Mammary epithelial cell (primary cell): ENCODE measurements at regions of chr6 and their contacts with region 1.

Region 1: DNA sequence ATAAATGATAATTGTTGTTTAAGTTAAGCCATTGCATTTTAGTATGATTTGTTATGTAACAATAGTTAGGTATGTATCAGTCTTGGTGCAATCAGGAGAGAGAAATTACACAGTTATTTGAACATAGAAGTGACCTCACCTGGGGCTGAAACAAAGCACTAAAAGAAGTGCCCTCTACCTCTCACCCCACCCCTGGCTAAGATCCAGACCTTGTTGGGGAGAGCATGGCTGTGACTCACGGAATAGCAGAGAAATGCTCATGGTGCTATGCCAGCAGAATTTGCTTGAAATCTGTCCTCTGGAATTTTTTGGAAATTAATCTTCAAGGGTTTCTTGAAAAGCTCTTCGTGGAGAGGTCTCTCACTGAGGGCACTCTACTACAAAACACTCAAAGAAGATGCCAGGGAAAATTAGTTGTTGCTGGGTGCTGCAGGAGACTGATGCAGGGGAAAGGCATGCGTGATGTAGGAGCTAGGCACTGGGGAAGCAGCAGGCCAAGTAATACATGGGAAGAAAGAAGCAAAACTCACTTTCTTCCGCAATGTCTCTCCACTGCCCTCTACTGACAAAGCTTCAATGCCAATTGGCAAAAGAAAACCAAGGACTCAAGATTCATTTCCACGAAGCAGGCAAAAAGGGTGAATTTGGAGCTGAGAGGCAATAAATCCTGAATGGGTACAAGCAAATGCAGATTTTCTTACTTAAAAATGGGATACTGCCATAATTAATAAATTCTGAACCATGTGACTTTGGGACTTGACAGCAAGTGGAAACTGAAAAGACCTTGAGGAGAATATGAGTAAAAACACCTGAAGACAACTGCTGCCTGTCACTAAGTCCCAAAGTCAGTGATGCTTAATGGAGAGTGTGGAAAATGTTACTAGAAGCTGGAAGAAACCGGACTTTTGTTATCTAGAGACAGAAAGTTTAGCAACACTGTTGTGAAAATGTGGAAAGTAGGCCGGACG is 136.3 kb upstream of the ZNF184 start:
- DNase-seq: peak; percentile 86
- H3K4me3 ChIP-seq: no peak overlapping the region
- H3K27ac ChIP-seq: peak overlapping the region; percentile 11
- H3K4me1 ChIP-seq: peaks cover 17% of the 10 kb centered on the region
- H3K27me3 ChIP-seq: no peaks in the 10 kb centered on the region
- CTCF ChIP-seq: peak; percentile 85 to 89

Region 2: DNA sequence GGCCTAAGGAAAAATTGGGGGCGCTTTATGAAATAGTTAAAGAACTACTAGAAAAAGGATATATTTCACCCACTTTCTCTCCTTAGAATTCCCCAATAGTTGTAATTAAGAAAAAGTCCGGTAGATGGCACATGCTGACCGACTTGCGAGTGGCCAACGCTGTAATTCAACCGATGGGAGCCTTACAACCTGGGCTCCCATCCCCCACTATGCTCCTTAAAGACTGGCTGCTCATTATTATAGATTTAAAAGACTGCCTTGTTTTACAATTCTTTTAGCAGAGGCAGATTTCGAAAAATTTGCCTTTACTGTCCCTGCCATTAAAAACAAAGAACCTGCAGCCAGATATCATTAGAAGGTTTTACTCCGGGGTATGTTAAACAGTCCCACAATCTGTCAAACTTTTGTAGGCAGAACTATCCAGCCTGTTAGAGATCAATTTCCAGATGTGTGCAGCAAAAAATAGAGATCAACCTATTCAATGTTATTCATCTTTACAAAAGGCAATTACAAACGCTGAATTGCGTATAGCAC is 420.2 kb before region 1 on chr6:
- CTCF ChIA-PET with region 1: no interaction called
- dilution Hi-C with region 1: no loop called
- in situ Hi-C with region 1: no loop called
- intact Hi-C with region 1: loop called (anchors 1 kb)
- DNase-seq: peak; percentile 71
- H3K4me3 ChIP-seq: peak overlapping the region; percentile 56 to 74 (median 71)
- H3K27ac ChIP-seq: peak overlapping the region; percentile 44
- H3K4me1 ChIP-seq: no peaks in the 10 kb centered on the region
- H3K27me3 ChIP-seq: no peaks in the 10 kb centered on the region
- CTCF ChIP-seq: peak; percentile 38 to 68

Region 3: DNA sequence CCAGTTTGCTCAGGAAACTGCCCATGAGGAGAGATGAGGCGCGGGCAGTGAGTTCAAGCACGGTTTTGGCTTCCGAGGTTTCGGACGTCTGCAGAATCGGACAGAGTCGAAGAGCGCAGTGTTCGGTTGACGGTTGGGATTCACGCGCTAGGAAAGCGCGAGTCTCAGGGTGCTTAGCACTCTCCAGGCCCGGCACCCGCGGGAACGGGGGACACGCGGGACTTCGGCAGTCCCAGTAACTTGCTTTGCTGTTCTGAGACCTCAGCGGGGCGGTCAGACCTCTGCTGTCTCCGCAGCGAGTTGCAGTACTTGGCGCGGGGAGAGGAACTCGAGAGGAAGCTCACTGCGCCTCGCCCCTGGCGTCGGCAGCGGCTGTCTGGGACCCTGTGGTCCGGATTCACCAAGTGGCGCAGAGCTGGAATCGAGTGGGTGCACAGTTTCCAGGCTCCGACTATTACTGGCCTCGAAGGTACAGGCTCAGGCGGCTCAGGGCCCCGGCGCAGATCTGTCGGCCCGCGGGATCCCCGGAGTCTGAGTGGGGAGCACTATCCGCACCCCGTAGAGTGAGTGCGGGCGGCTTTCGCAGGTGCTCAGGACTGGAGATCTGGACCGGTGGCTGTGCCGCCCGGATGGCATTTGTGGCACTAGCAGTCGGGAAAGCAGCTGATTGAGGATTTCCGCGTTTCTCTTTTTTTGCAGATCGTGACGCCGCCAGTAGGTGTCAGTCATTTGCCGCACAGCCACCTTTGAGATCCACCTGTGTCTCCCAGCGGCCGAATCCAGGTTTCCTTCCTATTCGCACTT is 296.9 kb before region 1 on chr6 and contains the start of gene POM121L2:
- CTCF ChIA-PET with region 1: no interaction called
- dilution Hi-C with region 1: no loop called
- in situ Hi-C with region 1: loop called in 1 of 2 experiments (anchors 25 kb)
- intact Hi-C with region 1: loop called (anchors 1 kb)
- DNase-seq: peak; percentile 73
- H3K4me3 ChIP-seq: peak within 1 kb of the TSS; percentile 60 to 90 (median 65)
- H3K27ac ChIP-seq: no peak within 1 kb of the TSS
- H3K4me1 ChIP-seq: peaks cover 13% of the 10 kb centered on the region
- H3K27me3 ChIP-seq: no peaks in the 10 kb centered on the region
- CTCF ChIP-seq: peak; percentile 64 to 87
- total RNA-seq, gene POM121L2: not detected

Region 4: DNA sequence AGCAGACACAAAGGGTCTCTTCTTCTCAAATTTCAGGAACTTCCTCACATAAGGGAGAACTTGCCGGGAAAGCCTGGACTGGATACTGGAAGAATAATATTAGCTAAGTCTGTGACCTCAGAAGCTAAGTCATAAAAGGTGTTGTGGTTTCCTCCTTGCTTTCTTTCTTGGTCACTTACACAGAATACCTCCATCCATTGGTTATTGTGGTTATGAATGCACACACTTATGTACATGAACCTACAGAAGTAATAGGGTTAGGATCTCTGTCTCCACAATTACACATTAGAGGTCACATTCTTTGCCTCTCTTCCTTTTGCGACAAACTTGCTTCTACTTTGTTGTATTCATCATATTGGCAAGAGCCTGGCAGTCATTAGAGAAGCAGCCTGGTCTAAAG is 180.2 kb before region 1 on chr6:
- CTCF ChIA-PET with region 1: no interaction called
- dilution Hi-C with region 1: no loop called
- in situ Hi-C with region 1: no loop called
- intact Hi-C with region 1: no loop called
- DNase-seq: no peak
- H3K4me3 ChIP-seq: no peak overlapping the region
- H3K27ac ChIP-seq: no peak overlapping the region
- H3K4me1 ChIP-seq: no peaks in the 10 kb centered on the region
- H3K27me3 ChIP-seq: no peaks in the 10 kb centered on the region
- CTCF ChIP-seq: no peak

Region 5: DNA sequence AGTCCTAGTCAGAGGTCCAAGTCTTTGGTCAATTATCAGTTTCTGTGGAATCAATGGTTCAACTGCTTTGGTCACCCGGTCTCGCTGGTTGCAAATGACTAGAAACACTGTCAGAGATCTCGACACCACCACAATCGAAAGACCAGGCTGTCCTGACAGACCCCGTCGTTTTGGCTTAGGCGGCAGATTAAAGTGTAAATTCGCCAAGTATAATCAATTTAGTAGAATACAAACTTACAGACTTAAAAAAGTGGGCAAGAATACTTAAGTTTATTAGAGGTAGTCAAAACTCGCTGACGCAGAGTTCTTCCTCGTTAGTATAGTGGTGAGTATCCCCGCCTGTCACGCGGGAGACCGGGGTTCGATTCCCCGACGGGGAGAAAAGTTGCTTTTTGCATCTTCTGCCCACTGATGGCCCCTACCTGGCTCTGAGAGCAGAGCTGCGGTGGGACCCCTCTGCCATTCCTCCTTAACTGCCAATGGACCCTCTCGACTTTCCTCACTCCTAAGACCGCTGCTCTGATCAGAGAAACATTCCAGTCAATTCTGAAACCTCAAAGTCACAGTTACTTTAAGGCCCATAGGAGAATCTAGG is 105.7 kb before region 1 on chr6:
- CTCF ChIA-PET with region 1: no interaction called
- dilution Hi-C with region 1: loop called (anchors 10 kb)
- in situ Hi-C with region 1: no loop called
- intact Hi-C with region 1: no loop called
- DNase-seq: peak; percentile 61
- H3K4me3 ChIP-seq: peak overlapping the region; percentile 48 to 64 (median 60)
- H3K27ac ChIP-seq: peak overlapping the region; percentile 71
- H3K4me1 ChIP-seq: no peaks in the 10 kb centered on the region
- H3K27me3 ChIP-seq: no peaks in the 10 kb centered on the region
- CTCF ChIP-seq: no peak

Region 6: DNA sequence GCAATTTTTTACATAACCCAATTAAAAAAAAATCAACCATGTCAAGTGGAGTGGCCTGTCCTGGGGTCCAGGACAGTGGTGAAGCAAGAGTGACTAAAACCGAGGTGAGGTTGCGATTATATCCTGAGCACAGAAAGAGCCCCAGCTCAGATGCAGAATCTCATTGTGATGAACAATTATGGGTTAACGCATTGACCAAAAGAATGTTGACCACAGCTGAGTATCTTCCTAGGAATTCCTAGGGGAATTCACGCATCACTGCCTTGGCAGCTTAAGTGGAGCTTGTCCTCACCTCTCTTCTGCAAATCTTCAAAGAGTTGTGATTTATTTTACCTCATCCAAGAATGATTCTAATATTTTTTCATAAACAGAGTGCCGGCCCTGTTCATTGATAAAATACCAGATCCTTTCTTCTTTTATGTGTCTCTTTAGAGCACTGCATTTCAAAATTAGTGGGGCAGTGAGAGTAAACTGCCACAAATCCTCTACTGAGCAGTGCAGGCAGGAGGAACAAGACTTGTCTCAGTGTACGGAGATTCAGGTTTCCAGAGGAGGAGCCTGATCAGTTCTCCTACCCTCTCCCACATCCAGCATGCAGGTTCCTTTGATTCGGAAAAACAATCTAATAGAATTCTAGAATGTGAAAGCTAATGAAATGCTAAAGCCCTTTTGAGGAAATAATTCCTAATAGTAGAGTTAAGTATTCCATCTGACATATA is 76.2 kb before region 1 on chr6:
- CTCF ChIA-PET with region 1: no interaction called
- dilution Hi-C with region 1: no loop called
- in situ Hi-C with region 1: no loop called
- intact Hi-C with region 1: no loop called
- DNase-seq: peak; percentile 85
- H3K4me3 ChIP-seq: no peak overlapping the region
- H3K27ac ChIP-seq: peak overlapping the region; percentile 63
- H3K4me1 ChIP-seq: peaks cover 18% of the 10 kb centered on the region
- H3K27me3 ChIP-seq: no peaks in the 10 kb centered on the region
- CTCF ChIP-seq: no peak

Region 7: DNA sequence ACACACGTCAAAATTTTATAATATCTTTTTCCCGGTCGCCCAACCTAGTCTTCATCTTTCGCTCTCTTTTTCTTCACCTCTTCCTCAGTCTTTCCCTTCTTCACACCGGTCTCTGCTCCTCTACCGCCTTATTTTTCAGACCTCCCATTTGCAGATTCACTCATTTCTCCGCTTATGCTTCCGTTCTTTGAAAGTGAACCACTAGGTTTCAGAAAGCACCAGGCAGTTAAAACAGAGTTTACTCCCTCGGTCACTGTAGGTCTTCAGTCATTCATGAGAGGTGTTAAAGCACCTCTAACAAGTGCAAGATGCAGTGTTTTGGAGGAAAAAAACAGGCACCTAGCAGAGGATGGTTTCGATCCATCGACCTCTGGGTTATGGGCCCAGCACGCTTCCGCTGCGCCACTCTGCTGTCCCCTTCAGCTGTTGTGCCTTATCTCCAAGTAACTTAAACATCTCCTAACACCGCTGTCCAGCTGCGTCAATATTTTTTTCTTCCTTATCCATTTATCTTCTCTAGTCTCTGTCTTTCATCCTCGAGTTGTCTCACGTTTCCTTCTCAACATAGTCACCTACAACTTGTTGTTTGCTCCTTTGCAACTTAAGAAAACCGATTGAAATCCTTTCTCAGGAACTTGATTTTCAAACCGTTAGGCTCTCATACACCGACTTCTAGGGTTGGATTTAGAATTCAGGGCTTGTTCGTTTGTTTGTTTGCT is 16.6 kb before region 1 on chr6:
- CTCF ChIA-PET with region 1: no interaction called
- dilution Hi-C with region 1: no loop called
- in situ Hi-C with region 1: no loop called
- intact Hi-C with region 1: loop called (anchors 1 kb)
- DNase-seq: peak; percentile 84
- H3K4me3 ChIP-seq: peak overlapping the region; percentile 43 to 62 (median 48)
- H3K27ac ChIP-seq: no peak overlapping the region
- H3K4me1 ChIP-seq: peaks cover 13% of the 10 kb centered on the region
- H3K27me3 ChIP-seq: no peaks in the 10 kb centered on the region
- CTCF ChIP-seq: no peak

Region 8: GRCh38 chr6:27795697-27796494 is 186.7 kb after region 1 on chr6:
- CTCF ChIA-PET with region 1: interaction called, 10 read pairs
- dilution Hi-C with region 1: no loop called
- in situ Hi-C with region 1: no loop called
- intact Hi-C with region 1: no loop called
- DNase-seq: peak; percentile 83
- H3K4me3 ChIP-seq: no peak overlapping the region
- H3K27ac ChIP-seq: no peak overlapping the region
- H3K4me1 ChIP-seq: peaks cover 8% of the 10 kb centered on the region
- H3K27me3 ChIP-seq: no peaks in the 10 kb centered on the region
- CTCF ChIP-seq: peak; percentile 74 to 87